ENCODE measurements at regions of chr13 and their contacts with region 1.

Region 1: GRCh38 chr13:20902438-20903163 is at the start of gene XPO4:
- DNase-seq: peak; percentile 91
- ATAC-seq: peak; percentile 94
- H3K4me3 Mint-ChIP-seq: peak within 1 kb of the TSS; percentile 91
- H3K27ac Mint-ChIP-seq: peak within 1 kb of the TSS; percentile 92
- H3K4me1 Mint-ChIP-seq: peaks cover 32% of the 10 kb centered on the region
- H3K27me3 Mint-ChIP-seq: no peaks in the 10 kb centered on the region
- total RNA-seq, gene XPO4: 22.8 to 26.4 TPM

Region 2: GRCh38 chr13:20566898-20567874 is 335.4 kb before region 1 on chr13 and contains the start of gene IFT88:
- CTCF ChIA-PET with region 1: no interaction called
- POLR2A ChIA-PET with region 1: no interaction called
- intact Hi-C with region 1: loop called in 1 of 2 experiments (anchors 1 kb)
- DNase-seq: peak; percentile 89
- ATAC-seq: peak; percentile 83
- H3K4me3 Mint-ChIP-seq: peak within 1 kb of the TSS; percentile 81
- H3K27ac Mint-ChIP-seq: peak within 1 kb of the TSS; percentile 80
- H3K4me1 Mint-ChIP-seq: peaks cover 19% of the 10 kb centered on the region
- H3K27me3 Mint-ChIP-seq: no peaks in the 10 kb centered on the region
- total RNA-seq, gene IFT88: 4.7 to 4.8 TPM

Region 3: GRCh38 chr13:21670883-21671619 is 768.5 kb after region 1 on chr13 and contains the start of gene FGF9:
- CTCF ChIA-PET with region 1: no interaction called
- POLR2A ChIA-PET with region 1: no interaction called
- intact Hi-C with region 1: loop called in 1 of 2 experiments (anchors 5 kb)
- DNase-seq: peak; percentile 88
- ATAC-seq: peak; percentile 78
- H3K4me3 Mint-ChIP-seq: peak within 1 kb of the TSS; percentile 76
- H3K27ac Mint-ChIP-seq: peak within 1 kb of the TSS; percentile 53
- H3K4me1 Mint-ChIP-seq: peaks cover 45% of the 10 kb centered on the region
- H3K27me3 Mint-ChIP-seq: peaks cover 43% of the 10 kb centered on the region
- total RNA-seq, gene FGF9: 0.19 TPM in 1 of 2 experiments, not detected in the other